H1 (cell line): ENCODE measurements at regions of chr16 and their contacts with region 1.

Region 1: GRCh38 chr16:78376452-78376851 is 277.0 kb downstream of the WWOX start:
- DNase-seq: no peak
- H3K4me3 ChIP-seq: no peak overlapping the region
- H3K27ac ChIP-seq: no peak overlapping the region
- H3K4me1 ChIP-seq: peaks cover 3 to 13% (median 5%) of the 10 kb centered on the region in 4 experiments; a peak in 4 of 7 replicates
- H3K27me3 ChIP-seq: no peaks in the 10 kb centered on the region
- CTCF ChIP-seq: no peak
- EP300 ChIP-seq: no peak
- POLR2A ChIP-seq: no peak
- RAD21 ChIP-seq: no peak

Region 2: DNA sequence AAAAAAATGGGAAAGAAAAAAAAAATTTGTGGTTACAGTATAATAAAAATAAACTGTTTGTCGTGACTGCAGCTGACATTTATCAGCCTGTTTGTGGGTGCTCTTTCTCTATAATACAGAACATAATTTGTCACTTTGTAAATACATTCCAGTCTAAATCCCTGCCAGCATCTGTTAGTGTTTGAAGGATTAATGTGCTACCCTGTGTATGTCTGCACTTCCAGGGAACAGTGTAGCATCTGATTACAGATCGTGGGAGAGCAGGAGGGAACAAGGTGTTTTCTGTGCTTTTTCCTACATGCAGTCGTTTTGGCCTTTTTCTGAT is 11.9 kb before region 1 on chr16:
- CTCF ChIA-PET with region 1: interaction called, 12 read pairs
- POLR2A ChIA-PET with region 1: no interaction called
- DNase-seq: no peak
- H3K4me3 ChIP-seq: no peak overlapping the region
- H3K27ac ChIP-seq: no peak overlapping the region
- H3K4me1 ChIP-seq: 0 out of 7 replicates have a peak, but pooled peaks cover 0 to 2% (median 0%) of the 10 kb centered on the region in 4 experiments
- H3K27me3 ChIP-seq: no peaks in the 10 kb centered on the region; a peak in 1 of 7 replicates
- CTCF ChIP-seq: no peak
- EP300 ChIP-seq: no peak
- POLR2A ChIP-seq: no peak
- RAD21 ChIP-seq: no peak

Region 3: DNA sequence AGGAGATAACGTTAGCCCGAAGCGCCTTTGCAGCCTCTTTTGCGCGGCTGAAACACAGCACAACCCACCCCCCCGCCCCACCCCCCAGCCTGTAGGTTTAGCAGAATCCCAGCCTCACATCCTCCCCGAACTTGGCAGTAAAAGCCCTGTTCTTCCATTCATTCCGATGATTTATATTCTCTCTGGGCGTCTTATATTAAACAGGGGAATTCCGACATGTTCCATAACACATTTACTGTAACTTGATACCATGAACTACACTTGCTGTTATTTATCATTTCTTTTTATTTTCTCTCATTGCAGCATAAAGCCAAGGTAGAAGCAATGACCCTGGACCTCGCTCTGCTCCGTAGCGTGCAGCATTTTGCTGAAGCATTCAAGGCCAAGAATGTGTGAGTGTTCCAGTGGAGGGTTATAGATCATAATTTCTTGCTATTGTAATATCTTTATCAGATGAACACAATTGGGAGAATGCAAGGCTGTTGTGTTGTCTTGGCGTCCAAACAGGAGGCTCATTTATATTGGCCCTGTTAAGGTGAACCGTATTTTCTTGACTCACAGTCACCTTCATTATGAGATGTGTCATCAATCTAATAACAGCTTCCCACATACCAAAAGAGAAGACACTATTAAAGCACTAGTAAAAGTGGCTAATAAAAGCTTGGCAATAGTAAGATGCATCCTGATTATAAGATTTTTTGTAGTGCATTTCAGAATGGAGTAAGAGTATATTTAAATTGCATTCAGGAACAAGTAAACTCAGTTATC is 10.3 kb after region 1 on chr16:
- CTCF ChIA-PET with region 1: interaction called, 10 read pairs
- POLR2A ChIA-PET with region 1: no interaction called
- DNase-seq: no peak
- H3K4me3 ChIP-seq: no peak overlapping the region
- H3K27ac ChIP-seq: no peak overlapping the region
- H3K4me1 ChIP-seq: peaks cover 0 to 8% (median 0%) of the 10 kb centered on the region in 4 experiments; a peak in 1 of 7 replicates
- H3K27me3 ChIP-seq: no peaks in the 10 kb centered on the region
- CTCF ChIP-seq: no peak
- EP300 ChIP-seq: no peak
- POLR2A ChIP-seq: no peak
- RAD21 ChIP-seq: no peak

Region 4: DNA sequence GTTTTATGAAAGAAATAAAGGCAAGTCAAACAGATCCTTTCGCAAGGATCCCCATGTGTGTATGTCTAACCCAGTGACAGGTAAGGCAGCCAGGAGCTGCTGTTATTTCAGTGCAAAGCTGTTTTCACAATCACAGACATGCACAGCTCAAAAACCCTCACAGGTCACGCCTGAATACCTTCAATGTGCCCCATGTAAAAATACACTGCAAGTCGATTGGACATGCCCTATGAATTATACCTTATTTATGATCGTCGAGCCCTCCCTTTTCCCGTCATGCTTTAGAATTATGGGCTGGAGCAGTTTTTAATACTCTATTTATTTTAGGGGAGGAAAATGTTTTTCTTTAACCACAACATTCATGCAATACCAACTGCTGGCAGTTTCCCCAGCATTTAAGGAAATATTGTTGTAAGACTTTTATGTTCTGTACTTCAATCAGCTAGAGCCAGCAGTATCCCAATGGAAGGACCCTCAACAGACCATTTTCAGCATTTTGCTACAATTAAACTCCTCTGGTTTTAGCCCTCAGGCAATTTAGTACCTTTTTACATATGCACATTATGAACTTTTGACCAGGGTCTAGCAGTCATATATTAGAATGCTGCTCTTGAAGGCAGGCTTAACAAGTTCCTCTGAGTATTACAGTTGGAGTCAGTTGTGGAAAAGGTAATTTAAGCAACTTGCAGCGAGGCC is 85.2 kb after region 1 on chr16:
- CTCF ChIA-PET with region 1: no interaction called
- POLR2A ChIA-PET with region 1: no interaction called
- DNase-seq: no peak
- H3K4me3 ChIP-seq: no peak overlapping the region
- H3K27ac ChIP-seq: no peak overlapping the region
- H3K4me1 ChIP-seq: no peaks in the 10 kb centered on the region
- H3K27me3 ChIP-seq: no peaks in the 10 kb centered on the region
- CTCF ChIP-seq: no peak
- EP300 ChIP-seq: no peak
- POLR2A ChIP-seq: no peak
- RAD21 ChIP-seq: no peak